GM12878 (cell line): ENCODE measurements at regions of chr9 and their contacts with region 1.

Region 1: DNA sequence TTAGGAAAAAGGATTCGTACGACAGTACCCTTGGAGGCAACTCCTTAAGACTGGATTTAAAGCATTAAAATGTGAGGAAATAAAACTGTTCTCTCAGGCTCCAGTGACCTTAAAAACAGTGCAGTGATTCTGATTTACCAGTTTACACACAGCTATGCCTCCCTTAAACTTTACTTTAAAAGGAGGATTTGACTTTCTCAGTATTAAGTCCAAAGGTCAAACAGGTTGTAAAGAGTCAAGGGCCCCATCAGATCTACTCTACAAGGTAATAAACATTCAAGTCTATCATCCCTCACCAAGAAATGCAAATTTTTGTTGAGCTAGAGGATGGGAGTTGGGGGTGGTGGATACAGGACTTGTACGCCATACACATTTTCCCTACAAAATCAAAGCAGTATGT is 75.2 kb downstream of the ELAVL2 start:
- DNase-seq: no peak
- ATAC-seq: peak; percentile 41
- H3K4me3 ChIP-seq: no peak overlapping the region
- H3K27ac ChIP-seq: no peak overlapping the region
- H3K4me1 ChIP-seq: no peaks in the 10 kb centered on the region
- H3K27me3 ChIP-seq: no peaks in the 10 kb centered on the region
- CTCF ChIP-seq: no peak
- EP300 ChIP-seq: no peak
- POLR2A ChIP-seq: no peak
- RAD21 ChIP-seq: no peak

Region 2: DNA sequence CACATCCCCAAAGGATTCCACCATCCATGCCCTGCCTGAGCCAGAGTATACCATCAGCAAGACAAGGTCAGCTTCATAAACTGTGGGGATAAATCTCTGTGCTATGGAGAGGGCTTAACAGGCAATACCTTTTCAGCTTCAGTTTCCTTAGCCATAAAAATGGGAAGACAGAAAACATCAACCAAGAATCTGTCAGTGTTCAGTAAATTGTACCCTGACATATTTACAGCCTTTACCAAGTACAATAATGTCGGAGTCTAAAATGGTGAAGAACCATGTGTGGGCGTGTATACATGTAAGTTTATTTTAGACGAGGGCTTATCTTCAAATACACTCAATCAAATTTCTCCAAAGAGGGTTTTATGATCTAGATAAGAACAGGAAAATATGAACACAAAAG is 19.5 kb before region 1 on chr9:
- CTCF ChIA-PET with region 1: interaction called, 3 read pairs
- POLR2A ChIA-PET with region 1: interaction called, 3 read pairs
- RAD21 ChIA-PET with region 1: interaction called, 12 read pairs
- SMC1A ChIA-PET with region 1: interaction called, 20 read pairs
- in situ Hi-C with region 1: no loop called
- intact Hi-C with region 1: no loop called
- DNase-seq: no peak
- ATAC-seq: no peak
- H3K4me3 ChIP-seq: no peak overlapping the region
- H3K27ac ChIP-seq: no peak overlapping the region
- H3K4me1 ChIP-seq: no peaks in the 10 kb centered on the region
- H3K27me3 ChIP-seq: no peaks in the 10 kb centered on the region
- CTCF ChIP-seq: no peak
- EP300 ChIP-seq: no peak
- POLR2A ChIP-seq: no peak
- RAD21 ChIP-seq: no peak

Region 3: DNA sequence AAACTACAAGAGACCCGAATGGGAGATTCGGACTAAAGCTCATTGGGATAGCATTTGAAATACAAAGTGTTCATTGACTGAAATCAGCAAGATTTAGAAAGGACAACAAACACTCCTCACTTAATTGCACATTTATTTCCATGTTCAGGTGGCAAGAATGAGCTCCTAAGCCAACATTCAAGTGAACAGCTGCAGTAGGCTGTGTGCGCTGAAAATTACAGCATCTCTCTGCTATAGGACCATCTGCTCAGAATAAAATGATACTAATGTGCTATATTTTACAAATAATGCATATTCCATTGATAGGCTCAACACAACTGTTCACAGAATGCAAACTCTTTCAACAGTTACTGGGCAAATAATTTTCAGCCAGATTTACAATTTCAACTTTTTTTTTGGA is 13.4 kb after region 1 on chr9:
- CTCF ChIA-PET with region 1: interaction called, 4 read pairs
- POLR2A ChIA-PET with region 1: interaction called, 3 read pairs
- RAD21 ChIA-PET with region 1: interaction called, 4 read pairs
- SMC1A ChIA-PET with region 1: interaction called, 18 read pairs
- in situ Hi-C with region 1: no loop called
- intact Hi-C with region 1: no loop called
- DNase-seq: no peak
- ATAC-seq: no peak
- H3K4me3 ChIP-seq: no peak overlapping the region
- H3K27ac ChIP-seq: no peak overlapping the region
- H3K4me1 ChIP-seq: no peaks in the 10 kb centered on the region
- H3K27me3 ChIP-seq: no peaks in the 10 kb centered on the region
- CTCF ChIP-seq: no peak
- EP300 ChIP-seq: no peak
- POLR2A ChIP-seq: no peak
- RAD21 ChIP-seq: no peak

Region 4: GRCh38 chr9:23769307-23769935 is 18.6 kb after region 1 on chr9:
- CTCF ChIA-PET with region 1: interaction called, 4 read pairs
- POLR2A ChIA-PET with region 1: no interaction called
- RAD21 ChIA-PET with region 1: interaction called, 4 read pairs
- SMC1A ChIA-PET with region 1: interaction called, 18 read pairs
- in situ Hi-C with region 1: no loop called
- intact Hi-C with region 1: no loop called
- DNase-seq: no peak
- ATAC-seq: peak; percentile 58
- H3K4me3 ChIP-seq: no peak overlapping the region
- H3K27ac ChIP-seq: no peak overlapping the region
- H3K4me1 ChIP-seq: no peaks in the 10 kb centered on the region
- H3K27me3 ChIP-seq: no peaks in the 10 kb centered on the region
- CTCF ChIP-seq: no peak
- EP300 ChIP-seq: no peak
- POLR2A ChIP-seq: no peak
- RAD21 ChIP-seq: no peak

Region 5: GRCh38 chr9:24708814-24709213 is 958.0 kb after region 1 on chr9:
- CTCF ChIA-PET with region 1: no interaction called
- POLR2A ChIA-PET with region 1: no interaction called
- RAD21 ChIA-PET with region 1: no interaction called
- SMC1A ChIA-PET with region 1: no interaction called
- in situ Hi-C with region 1: no loop called
- intact Hi-C with region 1: no loop called
- DNase-seq: no peak
- ATAC-seq: no peak
- H3K4me3 ChIP-seq: no peak overlapping the region
- H3K27ac ChIP-seq: no peak overlapping the region
- H3K4me1 ChIP-seq: no peaks in the 10 kb centered on the region
- H3K27me3 ChIP-seq: no peaks in the 10 kb centered on the region
- CTCF ChIP-seq: no peak
- EP300 ChIP-seq: no peak
- POLR2A ChIP-seq: no peak
- RAD21 ChIP-seq: no peak